Activated CD4-positive, alpha-beta memory T cell treated with anti-CD3 and anti-CD28 coated beads for 36 hours (primary cell): ENCODE measurements at regions of chr9 and their contacts with region 1.

Region 1: GRCh38 chr9:32378993-32379729 is 5.3 kb upstream of the ACO1 start:
- DNase-seq: peak; percentile 37
- H3K4me3 Mint-ChIP-seq: peak overlapping the region; percentile 31
- H3K27ac Mint-ChIP-seq: no peak overlapping the region
- H3K4me1 Mint-ChIP-seq: peaks cover 14% of the 10 kb centered on the region
- H3K27me3 Mint-ChIP-seq: peaks cover 5% of the 10 kb centered on the region

Region 2: GRCh38 chr9:32360983-32361673 is 18.0 kb before region 1 on chr9:
- CTCF ChIA-PET with region 1: interaction called, 10 read pairs
- POLR2A ChIA-PET with region 1: no interaction called
- intact Hi-C with region 1: no loop called
- DNase-seq: no peak
- H3K4me3 Mint-ChIP-seq: no peak overlapping the region
- H3K27ac Mint-ChIP-seq: no peak overlapping the region
- H3K4me1 Mint-ChIP-seq: no peaks in the 10 kb centered on the region
- H3K27me3 Mint-ChIP-seq: peaks cover 10% of the 10 kb centered on the region

Region 3: DNA sequence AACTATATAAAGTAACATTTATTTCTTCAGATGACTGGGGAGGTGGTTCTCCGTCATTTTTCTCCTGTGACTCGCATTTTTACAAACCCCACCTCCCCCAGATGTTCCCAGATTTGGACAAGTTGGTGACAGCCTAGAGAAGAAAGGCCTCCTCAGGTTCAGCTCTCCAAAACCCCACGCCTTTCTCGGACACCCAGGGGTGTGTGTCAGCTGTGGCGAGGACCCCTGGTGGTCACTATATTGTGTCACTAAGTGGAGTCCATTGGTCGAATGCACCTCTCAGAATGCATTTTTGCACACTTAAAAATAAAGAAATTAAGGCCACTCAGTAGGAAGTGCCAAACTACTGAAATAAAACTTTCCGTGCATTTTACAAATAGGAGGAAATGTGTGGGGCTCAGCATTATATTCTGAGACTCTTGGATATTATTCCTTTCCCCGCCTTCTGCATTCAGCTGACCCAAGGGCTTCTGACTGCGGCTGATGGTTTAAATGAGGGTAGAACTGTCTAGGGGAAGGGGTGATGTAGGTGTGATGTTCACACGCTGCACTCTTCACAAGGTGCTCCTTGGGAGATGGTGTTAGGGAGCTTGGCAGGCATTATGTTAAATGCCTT is 52.9 kb after region 1 on chr9:
- CTCF ChIA-PET with region 1: interaction called, 54 read pairs
- POLR2A ChIA-PET with region 1: no interaction called
- intact Hi-C with region 1: loop called (anchors 1 kb)
- DNase-seq: peak; percentile 28
- H3K4me3 Mint-ChIP-seq: no peak overlapping the region
- H3K27ac Mint-ChIP-seq: no peak overlapping the region
- H3K4me1 Mint-ChIP-seq: no peaks in the 10 kb centered on the region
- H3K27me3 Mint-ChIP-seq: no peaks in the 10 kb centered on the region

Region 4: DNA sequence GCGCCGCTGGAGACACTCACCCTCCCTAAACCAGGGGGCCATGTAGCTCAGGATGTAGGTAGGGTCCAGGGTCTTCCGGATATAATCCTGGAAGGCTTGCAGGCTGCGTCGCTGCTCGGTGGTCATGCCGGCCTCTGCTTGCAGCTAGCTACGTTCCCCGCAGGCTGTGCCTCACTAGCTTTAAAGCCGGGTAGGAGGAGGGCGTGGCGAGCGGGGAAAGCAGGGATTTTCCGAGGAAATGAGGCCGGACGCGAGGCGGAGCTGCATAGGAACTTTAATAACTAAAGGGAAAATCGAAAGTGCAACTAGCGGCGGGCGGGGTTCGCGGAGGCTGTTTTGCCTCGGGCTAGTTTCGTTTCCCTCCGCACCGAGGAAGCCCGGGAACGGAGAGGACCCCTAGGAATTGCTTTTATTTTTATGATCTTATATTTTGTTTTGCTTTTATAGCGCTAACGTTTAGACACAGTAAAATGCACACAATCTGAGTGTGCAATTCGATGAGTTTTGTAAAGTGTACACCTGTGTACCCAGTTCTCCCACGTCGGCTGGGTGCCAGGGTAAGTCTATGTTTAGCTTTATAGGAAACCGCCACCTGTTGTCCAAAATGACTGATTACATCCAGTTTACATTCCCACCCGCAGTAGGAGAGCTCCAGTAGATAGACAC is 147.0 kb after region 1 on chr9 and contains the start of gene RIGI:
- CTCF ChIA-PET with region 1: interaction called, 37 read pairs
- POLR2A ChIA-PET with region 1: interaction called, 3 read pairs
- intact Hi-C with region 1: loop called (anchors 1 kb)
- DNase-seq: peak; percentile 89
- H3K4me3 Mint-ChIP-seq: peak within 1 kb of the TSS; percentile 82
- H3K27ac Mint-ChIP-seq: peak within 1 kb of the TSS; percentile 81
- H3K4me1 Mint-ChIP-seq: peaks cover 41% of the 10 kb centered on the region
- H3K27me3 Mint-ChIP-seq: no peaks in the 10 kb centered on the region
- total RNA-seq, gene RIGI: 10.6 to 11.7 TPM

Region 5: GRCh38 chr9:32571969-32572899 is 193.1 kb after region 1 on chr9:
- CTCF ChIA-PET with region 1: interaction called, 502 read pairs
- POLR2A ChIA-PET with region 1: interaction called, 20 read pairs
- intact Hi-C with region 1: loop called (anchors 1 kb)
- DNase-seq: peak; percentile 85
- H3K4me3 Mint-ChIP-seq: peak overlapping the region; percentile 98
- H3K27ac Mint-ChIP-seq: peak overlapping the region; percentile 95
- H3K4me1 Mint-ChIP-seq: peaks cover 27% of the 10 kb centered on the region
- H3K27me3 Mint-ChIP-seq: no peaks in the 10 kb centered on the region

Region 6: DNA sequence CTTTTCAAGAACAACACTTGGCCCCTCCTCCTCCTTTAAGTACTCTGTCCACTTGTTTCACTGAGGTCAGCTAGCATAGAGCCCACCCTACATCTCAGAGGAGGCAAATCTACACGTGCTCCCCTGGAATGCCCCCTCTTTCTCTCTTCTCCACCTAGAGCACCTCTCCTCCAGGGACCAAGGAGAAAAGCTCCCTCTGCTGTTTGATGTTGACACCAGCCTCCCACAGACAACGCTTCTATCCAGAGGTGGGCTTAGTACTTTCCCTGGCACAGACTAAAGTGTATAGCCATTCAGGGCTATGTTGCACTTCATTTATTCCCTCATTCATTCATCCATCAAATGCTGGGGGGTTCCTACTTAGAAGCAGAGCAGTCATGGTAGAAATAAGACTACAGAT is 324.5 kb after region 1 on chr9:
- CTCF ChIA-PET with region 1: no interaction called
- POLR2A ChIA-PET with region 1: no interaction called
- intact Hi-C with region 1: loop called (anchors 10 kb)
- DNase-seq: no peak
- H3K4me3 Mint-ChIP-seq: no peak overlapping the region
- H3K27ac Mint-ChIP-seq: no peak overlapping the region
- H3K4me1 Mint-ChIP-seq: no peaks in the 10 kb centered on the region
- H3K27me3 Mint-ChIP-seq: peaks cover 1% of the 10 kb centered on the region